ENCODE measurements at regions of chr19 and their contacts with region 1.

Region 1: DNA sequence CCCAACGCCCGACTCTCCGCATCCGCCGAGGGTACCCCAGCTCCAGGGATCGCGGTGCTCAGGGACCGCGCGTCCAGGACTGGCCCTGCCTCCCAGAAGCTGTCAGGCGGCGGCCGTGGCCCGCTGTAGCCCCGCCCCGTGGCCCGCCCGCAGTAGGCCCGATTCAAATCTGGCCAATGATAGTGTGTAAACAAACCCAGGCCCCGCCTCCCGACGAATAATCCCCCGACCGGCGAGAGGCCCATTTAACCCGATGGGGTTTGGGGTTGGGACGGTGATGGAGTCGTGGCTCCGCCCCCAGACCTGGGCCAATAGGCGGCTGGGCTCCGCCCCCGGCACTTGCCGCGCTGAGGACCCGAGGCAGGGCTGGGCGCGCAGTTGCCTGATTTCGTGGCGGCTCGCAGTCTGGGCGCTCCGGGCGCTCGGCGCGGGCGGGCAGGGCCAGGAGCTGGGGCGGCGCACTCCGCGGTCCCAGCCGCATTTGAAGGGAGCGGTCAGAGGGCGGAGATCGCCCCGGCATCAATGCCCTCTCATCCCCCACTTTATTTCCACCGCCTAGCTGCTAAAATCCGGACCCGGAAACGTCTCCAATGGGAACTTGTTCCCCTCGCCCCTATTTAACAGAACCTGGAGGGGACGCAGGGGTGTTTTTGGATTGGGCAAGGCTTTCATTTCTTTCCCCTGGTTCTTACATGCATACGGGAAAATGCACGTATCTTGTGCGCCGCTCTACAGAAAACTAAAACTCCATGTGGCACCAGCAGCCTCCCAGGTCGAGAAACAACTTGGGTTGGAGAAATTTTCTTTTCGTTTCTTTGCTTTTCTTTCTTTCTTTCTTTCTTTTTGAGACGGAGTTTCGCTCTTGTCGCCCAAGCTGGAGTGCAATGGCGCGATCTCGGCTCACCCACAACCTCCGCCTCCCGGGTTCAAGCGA is 8.4 kb upstream of the BICRA start:
- DNase-seq: peak; percentile 100
- ATAC-seq: peak; percentile 98 to 99 (median 99)
- H3K4me3 ChIP-seq: peak overlapping the region; percentile 20 to 76 (median 67)
- H3K27ac ChIP-seq: peak overlapping the region; percentile 41 to 95 (median 85)
- H3K4me1 ChIP-seq: peaks cover 0 to 35% (median 18%) of the 10 kb centered on the region in 12 donors
- H3K27me3 ChIP-seq: no peaks in the 10 kb centered on the region
- CTCF ChIP-seq: peak in 3 of 12 donors; percentile 4 to 6 (median 6)
- POLR2A ChIP-seq: peak; percentile 24 to 93

Region 2: DNA sequence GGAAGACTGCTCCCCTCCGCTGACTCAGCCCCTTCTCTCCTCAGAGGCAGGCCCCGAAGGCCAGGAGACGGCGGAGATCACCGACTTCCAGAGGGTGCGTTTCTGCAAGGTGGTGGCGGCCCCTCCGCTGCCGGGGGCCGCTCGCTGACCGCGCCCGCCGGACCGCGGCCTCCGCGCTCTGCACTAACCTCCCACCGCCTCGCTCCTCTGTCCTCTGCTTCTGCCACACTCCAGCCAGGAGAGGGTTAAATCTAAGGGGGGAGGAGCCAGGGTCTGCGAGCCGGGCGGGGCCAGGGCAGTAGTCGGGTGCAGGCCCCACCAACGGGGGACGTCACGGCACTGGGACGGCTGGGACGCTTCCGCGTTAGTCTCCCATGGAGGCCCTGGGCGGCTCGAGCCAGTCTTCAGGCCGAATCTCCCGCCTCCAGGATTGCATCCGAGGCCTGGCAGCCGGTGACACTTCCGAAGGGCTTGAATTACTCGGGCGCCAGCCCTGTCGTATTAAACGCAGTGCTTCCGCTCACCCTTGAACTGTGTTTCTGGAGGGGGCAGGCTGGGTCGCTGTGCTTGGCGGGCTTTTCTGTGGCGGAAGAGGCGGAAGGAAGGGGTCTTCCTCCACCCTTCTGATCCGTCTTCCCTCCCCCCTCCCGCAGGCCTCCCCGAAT is 327.1 kb before region 1 on chr19:
- intact Hi-C with region 1: loop called in 1 of 10 experiments (anchors 10 kb)
- DNase-seq: peak; percentile 92 to 95 (median 94)
- ATAC-seq: peak; percentile 76 to 84 (median 77)
- H3K4me3 ChIP-seq: peak overlapping the region; percentile 47 to 83 (median 72)
- H3K27ac ChIP-seq: peak overlapping the region; percentile 89 to 99 (median 95)
- H3K4me1 ChIP-seq: peaks cover 3 to 48% (median 34%) of the 10 kb centered on the region in 12 donors
- H3K27me3 ChIP-seq: no peaks in the 10 kb centered on the region
- CTCF ChIP-seq: peak in 1 of 12 donors; percentile 9
- POLR2A ChIP-seq: peak in 1 of 2 donors; percentile 70

Region 3: GRCh38 chr19:47436712-47437401 is 163.7 kb before region 1 on chr19:
- intact Hi-C with region 1: loop called in 1 of 10 experiments (anchors 10 kb)
- DNase-seq: peak; percentile 64 to 83 (median 75)
- ATAC-seq: peak; percentile 74 to 93 (median 90)
- H3K4me3 ChIP-seq: no peak overlapping the region
- H3K27ac ChIP-seq: no peak overlapping the region
- H3K4me1 ChIP-seq: peaks cover 0 to 3% (median 0%) of the 10 kb centered on the region in 12 donors
- H3K27me3 ChIP-seq: peaks cover 0 to 76% (median 30%) of the 10 kb centered on the region in 9 donors
- CTCF ChIP-seq: peak; percentile 76 to 94 (median 85)
- POLR2A ChIP-seq: peak in 1 of 2 donors; percentile 16

Region 4: GRCh38 chr19:47523473-47523872 is 77.0 kb before region 1 on chr19:
- intact Hi-C with region 1: loop called in 3 of 10 experiments (anchors 5 kb)
- DNase-seq: peak in 2 of 5 donors; percentile 56 to 61
- ATAC-seq: peak in 3 of 4 donors; percentile 42 to 63 (median 48)
- H3K4me3 ChIP-seq: no peak overlapping the region
- H3K27ac ChIP-seq: peak overlapping the region in 11 of 12 donors; percentile 10 to 70 (median 46)
- H3K4me1 ChIP-seq: peaks cover 0 to 30% (median 13%) of the 10 kb centered on the region in 12 donors
- H3K27me3 ChIP-seq: peaks cover 0 to 7% (median 0%) of the 10 kb centered on the region in 9 donors
- CTCF ChIP-seq: no peak
- POLR2A ChIP-seq: no peak

Measured in heart left ventricle (tissue), 16 donors.